ENCODE measurements at regions of chr4 and their contacts with region 1.

Region 1: GRCh38 chr4:3442959-3443749 is 1.4 kb downstream of the HGFAC start:
- DNase-seq: peak in 32 of 42 donors; percentile 22 to 79 (median 56)

Region 2: GRCh38 chr4:3201718-3202702 is 241.1 kb before region 1 on chr4:
- intact Hi-C with region 1: loop called (anchors 10 kb)
- DNase-seq: peak in 2 of 42 donors; percentile 29

Region 3: GRCh38 chr4:3346146-3346545 is 97.0 kb before region 1 on chr4:
- intact Hi-C with region 1: loop called (anchors 5 kb)
- DNase-seq: peak in 22 of 42 donors; percentile 32 to 87 (median 69)

Measured in head of caudate nucleus (tissue), 42 donors.